CD4-positive, alpha-beta memory T cell (primary cell): ENCODE measurements at regions of chr16 and their contacts with region 1.

Region 1: GRCh38 chr16:28879841-28880588 is 1.7 kb downstream of the ATP2A1 start:
- DNase-seq: peak; percentile 79 to 92 (median 82)
- H3K4me3 ChIP-seq: peak overlapping the region; percentile 49 to 82
- H3K4me3 Mint-ChIP-seq: peak overlapping the region; percentile 88 to 93 (median 90)
- H3K27ac ChIP-seq: peak overlapping the region; percentile 53
- H3K27ac Mint-ChIP-seq: peak overlapping the region in 2 of 7 donors; percentile 66 to 74
- H3K4me1 ChIP-seq: peaks cover 13% of the 10 kb centered on the region
- H3K4me1 Mint-ChIP-seq: peaks cover 3 to 18% (median 11%) of the 10 kb centered on the region in 4 donors
- H3K27me3 ChIP-seq: no peaks in the 10 kb centered on the region
- H3K27me3 Mint-ChIP-seq: peaks cover 0 to 7% of the 10 kb centered on the region in 2 donors

Region 2: DNA sequence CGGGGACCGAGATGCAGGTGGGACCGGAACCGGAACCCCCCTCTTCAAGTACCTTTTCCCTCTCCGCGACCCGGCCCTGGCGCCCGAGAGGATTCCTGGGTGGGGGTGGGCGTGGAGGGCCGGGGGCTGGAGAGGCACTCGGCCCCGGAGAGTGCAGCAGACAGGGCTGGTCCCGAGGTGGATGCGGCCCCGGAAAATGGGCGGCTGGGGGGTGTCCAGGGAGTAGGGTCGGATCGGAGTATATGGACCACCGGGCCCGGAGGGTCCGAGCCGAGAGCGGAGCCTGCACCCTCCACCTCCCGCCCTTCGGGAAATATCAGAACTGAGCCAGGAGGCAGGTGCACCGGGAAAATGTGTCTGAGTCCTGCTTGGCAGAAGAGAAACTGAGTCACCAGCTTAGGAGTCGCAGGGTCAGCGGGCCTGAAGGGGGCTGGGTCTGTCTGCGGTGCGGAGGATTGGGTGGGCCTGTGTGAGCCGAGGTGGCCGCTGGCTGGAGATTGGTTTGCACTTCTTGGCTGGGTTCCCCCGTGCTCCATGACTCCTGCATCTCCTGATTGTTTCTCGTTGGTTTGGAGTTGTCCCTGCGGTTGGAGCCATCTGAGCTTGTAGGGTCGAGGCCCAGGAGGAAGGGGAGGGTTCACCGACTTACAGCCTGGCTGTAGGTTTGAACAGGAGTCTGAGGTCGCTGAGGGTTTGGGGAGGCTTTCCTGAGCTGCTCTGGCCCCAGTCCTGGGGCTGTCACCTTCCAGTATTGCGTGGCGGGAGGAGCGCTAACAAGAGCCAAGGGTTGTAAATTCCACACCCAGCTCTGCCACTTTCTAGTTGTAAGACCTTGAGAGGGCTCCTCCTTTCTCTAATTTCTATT is 15.9 kb before region 1 on chr16:
- CTCF ChIA-PET with region 1: interaction called, 3 read pairs
- POLR2A ChIA-PET with region 1: interaction called, 34 read pairs
- intact Hi-C with region 1: loop called (anchors 2 kb)
- DNase-seq: peak in 3 of 5 donors; percentile 15 to 62 (median 28)
- H3K4me3 ChIP-seq: peak overlapping the region; percentile 36 to 65
- H3K4me3 Mint-ChIP-seq: peak overlapping the region; percentile 95 to 99 (median 98)
- H3K27ac ChIP-seq: peak overlapping the region; percentile 85
- H3K27ac Mint-ChIP-seq: peak overlapping the region; percentile 95 to 100 (median 98)
- H3K4me1 ChIP-seq: peaks cover 25% of the 10 kb centered on the region
- H3K4me1 Mint-ChIP-seq: peaks cover 16 to 35% (median 22%) of the 10 kb centered on the region in 4 donors
- H3K27me3 ChIP-seq: no peaks in the 10 kb centered on the region
- H3K27me3 Mint-ChIP-seq: no peaks in the 10 kb centered on the region